Heart right ventricle (tissue), 16 donors: ENCODE measurements at regions of chr10 and their contacts with region 1.

Region 1: DNA sequence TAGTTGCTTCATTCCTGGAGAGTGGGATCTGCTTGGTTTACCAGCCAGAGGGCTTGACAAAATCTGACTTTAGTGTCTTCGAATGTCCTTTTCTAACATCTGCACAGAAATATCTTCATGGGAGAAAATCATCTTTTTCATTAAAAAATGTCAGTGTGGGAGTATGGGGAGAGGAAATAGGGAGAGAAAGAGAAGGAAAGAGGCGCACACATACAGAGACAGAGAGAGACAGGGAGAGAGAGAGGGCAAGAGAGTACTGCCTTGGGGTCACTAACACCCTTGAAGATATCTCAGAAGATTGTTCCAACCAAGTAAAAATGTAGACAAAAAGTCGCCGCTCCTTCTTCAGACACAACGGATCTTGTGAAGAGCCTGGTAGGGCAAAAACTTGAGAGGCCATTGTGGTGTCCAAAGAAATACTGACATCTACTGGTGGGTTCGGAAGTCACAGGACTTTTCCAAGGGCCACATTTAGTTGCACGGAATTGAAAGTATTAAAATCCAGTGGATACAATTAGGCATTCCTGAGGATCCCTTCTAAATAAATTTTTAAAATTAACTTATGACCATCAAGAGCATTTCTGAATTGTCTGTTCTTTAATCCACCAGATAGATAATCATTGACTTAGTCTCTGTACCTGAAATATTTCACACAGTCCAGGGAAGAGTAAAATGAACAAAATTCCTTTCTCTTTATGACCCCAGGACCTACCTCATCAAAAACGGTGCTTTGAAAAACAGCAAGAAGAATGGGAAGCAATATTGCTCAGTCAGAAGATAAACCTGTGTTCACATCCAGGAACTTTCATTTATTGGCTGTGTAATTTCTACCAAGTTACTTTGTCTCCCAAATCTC is 29.7 kb downstream of the VIM start:
- DNase-seq: peak in 1 of 2 donors; percentile 65
- ATAC-seq: peak; percentile 64 to 93 (median 87)
- H3K4me3 ChIP-seq: peak overlapping the region in 5 of 10 donors; percentile 18 to 38 (median 24)
- H3K27ac ChIP-seq: peak overlapping the region in 1 of 10 donors; percentile 10
- H3K4me1 ChIP-seq: peaks cover 0 to 13% (median 0%) of the 10 kb centered on the region in 9 donors
- H3K27me3 ChIP-seq: no peaks in the 10 kb centered on the region
- CTCF ChIP-seq: peak; percentile 75 to 91 (median 87)

Region 2: GRCh38 chr10:16828114-16828568 is 429.6 kb before region 1 on chr10:
- intact Hi-C with region 1: loop called in 4 of 10 experiments (anchors 5 kb)
- DNase-seq: peak; percentile 23 to 75
- ATAC-seq: peak; percentile 72 to 90 (median 84)
- H3K4me3 ChIP-seq: peak overlapping the region in 3 of 10 donors; percentile 5 to 17 (median 14)
- H3K27ac ChIP-seq: peak overlapping the region in 9 of 10 donors; percentile 19 to 75 (median 40)
- H3K4me1 ChIP-seq: peaks cover 0 to 41% (median 22%) of the 10 kb centered on the region in 9 donors
- H3K27me3 ChIP-seq: no peaks in the 10 kb centered on the region
- CTCF ChIP-seq: peak; percentile 51 to 76 (median 70)

Region 3: DNA sequence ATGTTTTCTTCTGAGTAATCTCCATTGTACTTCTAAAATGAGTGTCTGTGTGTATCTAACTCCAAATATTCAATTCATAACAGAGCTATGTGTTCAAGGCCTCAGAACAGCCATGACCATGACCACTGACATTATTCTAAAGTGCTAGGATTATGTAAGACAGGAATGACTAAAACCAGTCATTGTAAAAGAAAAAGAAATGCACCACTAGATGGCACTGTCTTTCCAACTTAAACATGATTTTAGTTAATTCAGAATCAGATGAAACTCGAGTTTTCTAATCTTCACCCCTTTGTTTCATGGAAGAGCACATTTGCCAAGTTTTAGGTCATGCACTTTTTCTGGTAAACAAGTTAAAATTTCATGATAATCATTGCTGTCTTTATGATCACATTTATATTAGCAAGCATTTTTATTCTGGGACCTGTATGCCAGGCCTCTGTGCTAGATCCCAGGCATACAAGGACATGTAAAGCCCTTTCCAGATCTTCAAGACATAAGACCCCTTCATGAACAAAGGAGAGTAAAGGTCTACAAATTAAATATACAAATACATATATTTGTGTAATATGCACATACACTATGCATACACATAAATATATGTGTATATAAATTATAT is 414.3 kb before region 1 on chr10:
- intact Hi-C with region 1: loop called (anchors 1 to 5 kb)
- DNase-seq: peak in 1 of 2 donors; percentile 17
- ATAC-seq: peak in 6 of 8 donors; percentile 64 to 73 (median 70)
- H3K4me3 ChIP-seq: no peak overlapping the region
- H3K27ac ChIP-seq: no peak overlapping the region
- H3K4me1 ChIP-seq: peaks cover 0 to 28% (median 0%) of the 10 kb centered on the region in 9 donors
- H3K27me3 ChIP-seq: no peaks in the 10 kb centered on the region
- CTCF ChIP-seq: peak; percentile 54 to 80 (median 69)

Region 4: GRCh38 chr10:17161775-17162174 is 95.9 kb before region 1 on chr10:
- intact Hi-C with region 1: no loop called
- DNase-seq: no peak
- ATAC-seq: no peak
- H3K4me3 ChIP-seq: no peak overlapping the region
- H3K27ac ChIP-seq: no peak overlapping the region
- H3K4me1 ChIP-seq: no peaks in the 10 kb centered on the region
- H3K27me3 ChIP-seq: no peaks in the 10 kb centered on the region
- CTCF ChIP-seq: no peak

Region 5: GRCh38 chr10:17175551-17175950 is 82.1 kb before region 1 on chr10:
- intact Hi-C with region 1: no loop called
- DNase-seq: peak in 1 of 2 donors; percentile 11
- ATAC-seq: peak in 4 of 8 donors; percentile 20 to 65 (median 38)
- H3K4me3 ChIP-seq: peak overlapping the region in 5 of 10 donors; percentile 1 to 26 (median 22)
- H3K27ac ChIP-seq: peak overlapping the region in 2 of 10 donors; percentile 18 to 43
- H3K4me1 ChIP-seq: peaks cover 0 to 21% (median 0%) of the 10 kb centered on the region in 9 donors
- H3K27me3 ChIP-seq: no peaks in the 10 kb centered on the region
- CTCF ChIP-seq: no peak